K562 (cell line): ENCODE measurements at regions of chr17 and their contacts with region 1.

Region 1: DNA sequence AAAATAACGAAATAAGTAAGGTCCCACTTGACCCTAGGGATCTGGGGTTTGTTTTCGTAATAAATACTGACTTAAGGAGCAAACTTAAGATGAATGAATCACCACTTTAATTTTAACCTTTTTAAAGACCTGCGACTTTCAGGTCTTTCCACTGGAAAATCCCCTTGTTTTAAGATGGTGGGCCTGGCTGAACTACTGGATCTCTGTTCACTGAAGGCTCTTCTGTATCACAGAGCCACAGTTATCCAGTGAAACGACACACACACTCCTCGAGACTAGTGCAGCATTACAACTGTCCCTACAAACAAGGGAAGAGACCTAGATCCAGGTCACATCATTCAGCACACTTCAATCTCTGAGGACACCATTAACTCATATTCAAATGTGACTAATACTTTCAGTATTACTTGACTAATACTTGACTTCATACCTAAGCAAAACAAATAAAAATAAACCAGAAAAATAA is 299.0 kb downstream of the CEP112 start:
- DNase-seq: no peak
- ATAC-seq: no peak
- H3K4me3 ChIP-seq: no peak overlapping the region
- H3K27ac ChIP-seq: no peak overlapping the region
- H3K4me1 ChIP-seq: no peaks in the 10 kb centered on the region
- H3K27me3 ChIP-seq: no peaks in the 10 kb centered on the region
- CTCF ChIP-seq: no peak
- EP300 ChIP-seq: no peak
- POLR2A ChIP-seq: no peak
- RAD21 ChIP-seq: no peak

Region 2: GRCh38 chr17:65917560-65917959 is 24.6 kb after region 1 on chr17:
- CTCF ChIA-PET with region 1: no interaction called
- POLR2A ChIA-PET with region 1: no interaction called
- in situ Hi-C with region 1: no loop called
- intact Hi-C with region 1: loop called (anchors 1 kb)
- DNase-seq: no peak
- ATAC-seq: no peak
- H3K4me3 ChIP-seq: no peak overlapping the region
- H3K27ac ChIP-seq: no peak overlapping the region
- H3K4me1 ChIP-seq: no peaks in the 10 kb centered on the region
- H3K27me3 ChIP-seq: no peaks in the 10 kb centered on the region
- CTCF ChIP-seq: no peak
- EP300 ChIP-seq: no peak
- POLR2A ChIP-seq: no peak
- RAD21 ChIP-seq: no peak